A549 (cell line): ENCODE measurements at regions of chr1 and their contacts with region 1.

Region 1: GRCh38 chr1:211133836-211134669 is at the start of gene KCNH1:
- DNase-seq: peak; percentile 78 to 86
- ATAC-seq: peak; percentile 95
- H3K4me3 ChIP-seq: peak within 1 kb of the TSS; percentile 67
- H3K27ac ChIP-seq: peak within 1 kb of the TSS; percentile 89 to 93
- H3K4me1 ChIP-seq: peaks cover 20% of the 10 kb centered on the region
- CTCF ChIP-seq: peak; percentile 100
- EP300 ChIP-seq: peak in 1 of 2 experiments; percentile 32; a peak in 1 of 5 replicates
- POLR2A ChIP-seq: no peak
- RAD21 ChIP-seq: peak; percentile 96 to 100
- polyA plus RNA-seq, gene KCNH1: 7.9 and 8.4 TPM in 2 replicates

Region 2: DNA sequence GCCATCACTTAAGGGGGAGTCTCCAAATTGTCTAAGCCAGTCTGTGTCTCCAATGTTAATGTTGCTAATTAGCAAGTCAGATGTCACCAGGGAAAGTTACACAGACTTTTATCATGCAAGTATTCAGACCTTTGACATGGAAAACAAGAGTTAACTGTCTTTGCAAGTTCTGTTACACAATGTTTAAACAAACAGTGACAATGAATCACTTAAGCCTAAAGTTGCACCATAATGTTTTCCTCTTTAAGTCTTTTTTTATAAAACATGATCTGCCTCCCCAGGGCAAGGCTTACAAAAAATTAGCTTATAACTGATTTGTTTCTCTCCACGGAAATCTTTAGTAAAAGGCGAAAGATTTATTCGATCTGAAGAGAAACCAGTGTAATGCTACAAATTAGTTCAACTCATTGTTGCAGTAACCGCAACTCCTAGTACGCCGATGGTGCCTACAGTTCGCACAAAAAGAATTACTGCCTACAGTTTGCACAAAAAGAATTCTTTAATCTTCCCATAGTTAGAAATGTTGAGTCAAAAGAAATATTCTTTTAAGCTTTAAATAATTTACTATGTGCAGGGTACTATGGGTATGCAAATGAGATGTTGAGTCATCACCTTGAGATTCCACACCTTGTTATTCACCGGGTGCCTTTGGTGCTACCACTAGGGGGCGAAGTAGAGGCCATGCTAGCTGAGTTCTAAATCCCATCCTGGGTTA is 760.0 kb before region 1 on chr1:
- CTCF ChIA-PET with region 1: interaction called, 20 read pairs
- POLR2A ChIA-PET with region 1: interaction called, 22 read pairs
- DNase-seq: peak; percentile 80 to 97
- ATAC-seq: peak; percentile 80 to 88
- H3K4me3 ChIP-seq: no peak overlapping the region
- H3K27ac ChIP-seq: peak overlapping the region; percentile 86 to 90
- H3K4me1 ChIP-seq: peaks cover 41% of the 10 kb centered on the region
- CTCF ChIP-seq: peak; percentile 96
- EP300 ChIP-seq: peak in 1 of 2 experiments; percentile 36; a peak in 1 of 5 replicates
- POLR2A ChIP-seq: peak; percentile 13
- RAD21 ChIP-seq: peak; percentile 46 to 58; a peak in 4 of 5 replicates

Region 3: DNA sequence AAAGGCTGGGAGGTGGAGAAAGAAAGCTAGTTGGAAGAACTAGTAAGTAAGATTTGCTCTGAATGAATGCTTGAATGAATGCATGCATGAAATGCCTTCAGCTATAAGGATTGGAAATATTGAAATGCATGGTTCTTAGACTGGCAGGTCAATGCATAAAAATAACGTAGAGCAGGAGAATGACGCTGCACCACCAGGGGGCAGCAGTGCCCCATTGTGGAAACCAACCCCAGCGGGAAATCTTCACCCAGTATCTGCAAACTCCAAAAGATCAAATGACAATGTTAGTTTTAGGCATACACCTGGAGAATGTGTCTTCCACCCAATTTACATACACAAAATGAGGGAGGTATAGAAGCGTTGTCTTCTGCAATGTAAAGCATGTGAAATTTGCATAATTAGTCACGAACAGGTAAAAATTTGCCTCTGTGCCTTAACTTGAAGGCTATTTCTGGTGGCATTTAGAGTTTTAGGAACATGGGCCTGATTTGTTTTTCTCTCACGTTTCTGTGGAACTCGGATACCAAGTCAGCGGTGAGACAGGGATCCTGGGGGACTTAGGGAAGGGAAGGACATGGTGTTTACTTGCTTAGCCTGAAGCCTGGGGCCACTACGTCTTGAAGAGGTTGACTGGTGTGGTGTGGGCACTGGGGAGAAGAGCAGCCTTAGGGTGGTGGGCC is 726.7 kb before region 1 on chr1:
- CTCF ChIA-PET with region 1: interaction called, 388 read pairs
- POLR2A ChIA-PET with region 1: interaction called, 3 read pairs
- DNase-seq: peak; percentile 60 to 77
- ATAC-seq: peak; percentile 88 to 96; a peak in 5 of 6 replicates
- H3K4me3 ChIP-seq: no peak overlapping the region
- H3K27ac ChIP-seq: peak overlapping the region; percentile 29 to 74; a peak in 5 of 6 replicates
- H3K4me1 ChIP-seq: peaks cover 5% of the 10 kb centered on the region
- CTCF ChIP-seq: peak; percentile 98
- EP300 ChIP-seq: no peak
- POLR2A ChIP-seq: no peak
- RAD21 ChIP-seq: peak; percentile 96 to 98

Region 4: DNA sequence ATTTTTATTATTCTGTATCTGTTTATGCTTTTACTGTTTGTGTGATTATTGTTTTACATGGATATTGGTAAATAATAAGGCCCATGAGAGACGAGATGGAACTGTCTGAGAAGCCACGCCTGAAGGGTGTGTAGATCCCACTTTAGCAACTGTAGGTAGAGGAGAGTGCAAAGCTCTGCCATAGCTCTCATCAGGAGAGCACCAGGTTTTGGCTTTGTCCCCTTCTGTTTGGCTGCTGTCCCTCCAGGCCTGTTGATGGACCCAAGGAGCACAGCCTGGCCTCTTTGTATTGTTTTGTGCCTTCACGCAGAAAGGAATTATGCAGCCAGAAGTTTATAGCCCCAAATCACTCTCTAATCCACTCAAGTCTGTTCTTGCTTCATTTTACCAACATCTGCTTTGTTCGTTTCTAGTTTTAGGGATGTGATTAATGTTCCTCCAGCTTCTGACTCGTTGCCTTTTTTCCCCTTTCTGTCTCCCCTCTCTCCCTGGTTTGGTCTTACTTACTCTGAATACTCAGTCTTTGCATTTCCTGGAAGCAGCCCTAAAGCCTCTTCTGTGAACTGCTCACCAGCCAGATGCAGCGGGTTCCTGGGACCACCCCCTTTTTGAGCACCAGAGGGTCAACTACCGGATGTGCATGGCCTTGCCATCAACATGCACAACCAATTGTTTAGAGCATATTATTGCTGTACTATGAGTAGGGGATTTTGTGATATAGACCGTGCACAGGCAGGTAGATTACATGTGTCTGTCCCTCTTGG is 678.0 kb before region 1 on chr1:
- CTCF ChIA-PET with region 1: interaction called, 270 read pairs
- POLR2A ChIA-PET with region 1: no interaction called
- DNase-seq: no peak
- ATAC-seq: no peak
- H3K4me3 ChIP-seq: no peak overlapping the region
- H3K27ac ChIP-seq: no peak overlapping the region
- H3K4me1 ChIP-seq: no peaks in the 10 kb centered on the region
- CTCF ChIP-seq: no peak
- EP300 ChIP-seq: no peak
- POLR2A ChIP-seq: no peak
- RAD21 ChIP-seq: no peak

Region 5: DNA sequence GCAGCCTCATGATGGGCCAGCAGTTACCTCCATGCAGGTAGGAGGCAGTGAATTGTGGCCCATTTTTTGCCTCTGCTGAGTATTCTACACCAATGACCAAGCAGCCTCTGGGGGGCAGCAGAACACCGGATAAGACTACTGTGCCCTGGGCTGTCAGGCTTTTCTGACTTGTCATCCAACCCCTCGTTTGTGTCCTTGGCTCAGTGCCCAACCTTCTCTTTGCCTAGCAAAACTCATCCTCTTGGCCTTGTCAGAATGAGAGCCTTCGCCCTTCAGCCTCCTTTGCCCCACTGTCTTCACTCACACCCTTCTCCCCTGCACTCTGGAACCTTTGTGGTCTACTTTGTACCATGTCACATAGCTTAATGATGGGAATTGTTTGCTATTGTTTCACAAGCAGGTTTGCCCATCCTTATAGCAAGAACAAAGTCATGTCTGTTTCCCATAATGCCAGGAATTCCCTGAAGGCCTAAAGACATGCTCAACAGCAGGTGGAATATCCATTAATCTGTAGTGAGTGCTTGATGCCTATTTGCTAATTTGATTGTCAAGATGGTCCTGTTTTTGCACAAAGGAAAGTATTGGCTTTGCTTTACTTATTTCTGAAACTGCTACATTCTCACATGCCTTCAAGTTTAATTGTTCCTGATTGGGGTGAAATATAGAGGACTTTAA is 549.5 kb before region 1 on chr1:
- CTCF ChIA-PET with region 1: interaction called, 279 read pairs
- POLR2A ChIA-PET with region 1: interaction called, 6 read pairs
- DNase-seq: peak; percentile 86 to 94
- ATAC-seq: peak; percentile 97 to 99
- H3K4me3 ChIP-seq: no peak overlapping the region
- H3K27ac ChIP-seq: peak overlapping the region; percentile 64 to 79
- H3K4me1 ChIP-seq: peaks cover 14% of the 10 kb centered on the region
- CTCF ChIP-seq: peak; percentile 96
- EP300 ChIP-seq: no peak
- POLR2A ChIP-seq: no peak
- RAD21 ChIP-seq: peak; percentile 99

Region 6: DNA sequence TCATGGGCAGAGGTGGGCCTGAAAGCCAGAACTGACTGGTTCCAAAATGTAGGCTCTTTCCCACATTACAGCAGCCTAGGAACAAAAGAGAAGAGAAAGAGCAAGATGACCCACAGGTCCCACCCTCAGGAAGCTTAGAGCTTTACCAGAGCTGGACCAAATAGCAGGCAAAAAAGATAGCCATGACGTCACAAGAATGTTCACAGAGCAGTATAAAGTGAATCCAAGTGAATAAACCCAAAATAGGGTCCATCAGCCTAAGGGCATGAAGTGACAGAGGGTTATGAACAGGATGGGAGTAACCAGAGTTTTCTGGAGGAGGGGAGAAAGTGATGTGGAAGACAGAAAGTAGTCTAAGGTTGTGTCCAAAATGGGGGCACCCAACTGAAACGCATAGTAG is 221.3 kb before region 1 on chr1:
- CTCF ChIA-PET with region 1: no interaction called
- POLR2A ChIA-PET with region 1: no interaction called
- DNase-seq: no peak
- ATAC-seq: no peak
- H3K4me3 ChIP-seq: no peak overlapping the region
- H3K27ac ChIP-seq: no peak overlapping the region
- H3K4me1 ChIP-seq: peaks cover 25% of the 10 kb centered on the region; the same call in 2 of the 3 replicates
- CTCF ChIP-seq: no peak
- EP300 ChIP-seq: no peak
- POLR2A ChIP-seq: no peak
- RAD21 ChIP-seq: no peak

Region 7: DNA sequence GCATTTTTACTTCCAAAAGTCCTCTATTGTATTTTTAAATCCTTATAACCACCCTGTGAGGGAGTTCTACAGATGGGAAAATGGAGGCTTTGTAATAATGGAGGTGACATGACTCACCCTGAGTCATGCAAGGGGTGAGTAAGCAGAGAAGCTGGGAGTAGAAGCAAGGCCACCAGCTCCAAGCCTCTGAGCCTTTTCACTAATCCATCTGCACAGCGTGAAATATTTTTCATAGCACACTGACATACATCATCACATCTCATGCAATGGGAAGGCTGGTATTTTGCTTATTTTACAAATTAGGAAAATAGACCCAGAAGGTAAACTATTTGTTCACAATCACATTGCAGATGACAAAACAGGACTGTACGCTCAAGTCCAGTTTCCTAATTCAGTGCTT is 97.0 kb before region 1 on chr1:
- CTCF ChIA-PET with region 1: interaction called, 10 read pairs
- POLR2A ChIA-PET with region 1: no interaction called
- DNase-seq: peak; percentile 75 to 85
- ATAC-seq: peak; percentile 99 to 100
- H3K4me3 ChIP-seq: no peak overlapping the region
- H3K27ac ChIP-seq: peak overlapping the region; percentile 71 to 86
- H3K4me1 ChIP-seq: peaks cover 17% of the 10 kb centered on the region
- CTCF ChIP-seq: no peak
- EP300 ChIP-seq: peak in 1 of 2 experiments; percentile 27; a peak in 1 of 5 replicates
- POLR2A ChIP-seq: no peak
- RAD21 ChIP-seq: 0 out of 5 replicates have a peak, but pooled peaks of 1 of the 2 experiments have one; percentile 1

Region 8: DNA sequence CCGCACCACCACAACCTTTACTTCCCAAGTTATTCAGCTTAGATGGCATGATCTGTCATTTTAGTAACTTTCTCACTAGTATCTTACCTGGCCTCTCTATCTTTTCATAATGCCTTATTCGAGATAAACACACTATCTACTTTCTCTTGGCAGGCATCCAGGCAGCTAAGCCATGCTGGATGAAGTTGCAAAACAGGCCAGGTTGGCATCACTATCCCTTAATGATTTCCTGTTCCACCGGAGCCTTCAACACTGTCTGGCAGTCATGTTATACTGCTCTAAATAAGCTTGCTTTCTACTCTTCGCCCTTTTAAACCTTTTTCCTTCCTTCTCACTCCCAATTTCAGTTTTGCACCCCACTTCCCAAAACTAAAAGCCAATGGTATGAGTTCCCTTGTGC is 11.9 kb after region 1 on chr1:
- CTCF ChIA-PET with region 1: interaction called, 19 read pairs
- POLR2A ChIA-PET with region 1: no interaction called
- DNase-seq: no peak
- ATAC-seq: no peak
- H3K4me3 ChIP-seq: no peak overlapping the region
- H3K27ac ChIP-seq: no peak overlapping the region
- H3K4me1 ChIP-seq: no peaks in the 10 kb centered on the region
- CTCF ChIP-seq: no peak
- EP300 ChIP-seq: no peak
- POLR2A ChIP-seq: no peak
- RAD21 ChIP-seq: no peak

Region 9: GRCh38 chr1:211247921-211248320 is 113.9 kb after region 1 on chr1:
- CTCF ChIA-PET with region 1: no interaction called
- POLR2A ChIA-PET with region 1: no interaction called
- DNase-seq: no peak
- ATAC-seq: no peak
- H3K4me3 ChIP-seq: no peak overlapping the region
- H3K27ac ChIP-seq: no peak overlapping the region
- H3K4me1 ChIP-seq: no peaks in the 10 kb centered on the region
- CTCF ChIP-seq: no peak
- EP300 ChIP-seq: no peak
- POLR2A ChIP-seq: no peak
- RAD21 ChIP-seq: no peak